Cardiac septum (tissue), 1 donor: ENCODE measurements at regions of chr13 and their contacts with region 1.

Region 1: DNA sequence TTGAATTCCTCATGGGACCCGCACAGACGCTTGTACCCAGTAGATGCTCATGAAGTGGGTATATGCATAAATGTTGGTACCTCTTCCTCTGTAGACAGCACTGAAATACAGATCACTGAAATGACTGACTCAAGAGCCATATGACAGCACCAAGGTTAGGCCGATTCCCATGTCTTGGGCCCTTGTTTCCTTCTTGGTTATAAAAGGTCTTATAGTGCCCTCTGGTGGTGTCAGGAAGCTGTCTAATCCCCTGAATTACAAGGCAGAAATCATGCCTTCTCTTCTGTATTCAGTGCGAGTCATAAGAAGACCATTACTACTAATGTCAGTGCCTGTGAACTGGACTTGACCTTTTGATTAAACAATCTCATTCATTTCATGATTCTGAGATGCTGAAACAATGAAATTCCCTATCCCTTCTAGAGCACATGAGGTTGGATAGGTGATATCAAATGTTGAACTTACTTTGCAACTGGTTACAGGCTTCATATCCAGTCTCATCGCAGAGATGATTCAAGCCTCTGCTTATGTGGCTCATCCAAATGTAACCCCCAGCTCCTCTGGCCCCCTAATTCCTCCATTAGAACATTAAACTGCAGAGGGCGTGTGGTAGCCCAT is 59.7 kb downstream of the SPATA13 start:
- DNase-seq: no peak

Region 2: GRCh38 chr13:23921451-23921888 is 298.7 kb before region 1 on chr13:
- intact Hi-C with region 1: loop called (anchors 5 kb)
- DNase-seq: no peak

Region 3: DNA sequence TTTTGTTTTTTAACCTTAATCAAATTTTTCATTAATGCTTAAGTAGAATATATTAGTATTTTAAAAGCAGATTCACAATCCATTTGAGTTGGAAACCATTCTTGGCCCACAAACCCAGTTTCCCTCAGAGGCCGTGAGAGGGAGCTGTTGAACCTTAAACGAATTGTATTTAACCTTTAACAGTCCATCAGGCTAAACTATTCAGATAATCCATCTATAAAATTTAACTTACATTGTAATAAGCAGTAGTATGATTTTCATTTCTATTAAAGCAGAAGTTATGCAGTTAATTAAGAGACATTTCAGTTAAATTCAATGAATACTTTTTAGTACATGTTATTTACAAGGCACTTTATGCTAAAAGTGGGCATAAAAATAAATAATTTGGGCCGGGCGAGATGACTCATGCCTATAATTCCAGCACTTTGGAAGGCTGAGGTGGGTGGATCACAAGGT is 199.8 kb before region 1 on chr13:
- intact Hi-C with region 1: loop called (anchors 2 kb)
- DNase-seq: no peak

Region 4: GRCh38 chr13:24053519-24054251 is 166.5 kb before region 1 on chr13:
- intact Hi-C with region 1: loop called (anchors 2 kb)
- DNase-seq: no peak

Region 5: DNA sequence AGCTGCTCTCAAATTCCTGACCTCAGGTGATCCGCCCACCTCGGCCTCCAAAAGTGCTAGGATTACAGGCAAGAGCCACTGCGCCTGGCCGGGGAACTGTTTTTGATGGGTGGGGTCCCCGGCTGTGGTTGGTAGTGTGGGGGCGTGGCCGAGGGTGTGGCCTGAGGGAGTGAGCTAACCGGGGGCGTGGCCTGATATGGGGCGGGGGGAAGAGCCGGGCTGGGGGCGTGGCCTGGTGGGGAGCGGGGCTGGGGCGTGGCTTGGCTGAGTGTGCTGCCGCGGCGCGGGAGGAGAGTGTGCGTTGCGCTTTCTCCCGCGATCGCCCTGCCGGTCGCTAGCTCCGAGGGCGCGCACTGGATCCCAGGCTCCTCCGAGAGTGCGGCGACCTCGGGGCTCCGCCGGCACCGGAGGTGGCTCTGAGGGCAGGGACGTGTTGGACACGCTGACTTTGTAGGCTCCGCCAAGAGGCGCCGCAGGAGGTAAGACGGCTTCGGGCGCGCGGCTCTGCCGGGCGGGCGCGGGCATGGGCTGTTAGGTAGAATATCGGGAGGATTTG is 59.7 kb before region 1 on chr13 and contains the start of gene SPATA13:
- intact Hi-C with region 1: loop called (anchors 5 kb)
- DNase-seq: peak; percentile 94
- total RNA-seq, gene SPATA13: 8.0 TPM